Posterior cingulate gyrus (tissue), 11 donors: ENCODE measurements at regions of chr10 and their contacts with region 1.

Region 1: GRCh38 chr10:28676968-28677887 is at the start of gene BAMBI:
- DNase-seq: peak; percentile 85 to 99 (median 90)

Region 2: DNA sequence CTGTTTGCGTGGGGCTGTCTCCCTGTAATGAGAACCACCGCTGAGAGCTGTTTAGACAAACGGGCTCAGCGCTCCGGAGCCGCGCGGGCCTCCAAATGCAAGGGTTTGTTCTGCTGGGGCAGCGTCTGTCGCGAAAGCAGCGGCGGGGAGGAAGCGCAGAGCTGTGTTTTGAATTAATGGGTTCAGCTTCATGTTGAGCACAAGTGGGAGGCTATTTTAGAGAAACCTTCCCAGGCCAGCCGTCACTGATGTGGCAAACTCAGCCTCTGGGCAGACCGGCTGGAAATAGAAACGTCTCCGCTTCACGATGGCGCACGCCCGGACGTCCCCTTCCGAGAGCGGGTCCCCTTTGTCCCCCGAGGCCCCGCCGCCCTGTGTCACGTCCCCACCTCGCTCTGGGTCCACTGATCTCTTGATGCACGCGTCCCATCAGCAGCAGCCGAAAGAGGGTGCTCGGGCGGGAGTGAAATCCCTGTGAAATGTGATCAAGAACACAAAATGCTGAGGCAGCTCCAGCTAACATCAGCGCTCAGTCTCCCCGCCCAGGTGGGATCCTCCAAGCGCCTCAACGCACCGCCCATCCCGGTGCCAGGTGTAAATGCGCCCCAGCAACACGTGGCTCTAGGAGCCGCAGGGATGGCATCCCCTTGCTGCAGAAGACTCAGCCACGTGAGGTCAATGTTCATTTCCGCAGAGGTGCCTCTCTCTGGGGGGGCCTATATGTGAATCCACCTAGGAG is 45.0 kb after region 1 on chr10:
- intact Hi-C with region 1: loop called (anchors 5 kb)
- DNase-seq: peak; percentile 33 to 95 (median 64)

Region 3: DNA sequence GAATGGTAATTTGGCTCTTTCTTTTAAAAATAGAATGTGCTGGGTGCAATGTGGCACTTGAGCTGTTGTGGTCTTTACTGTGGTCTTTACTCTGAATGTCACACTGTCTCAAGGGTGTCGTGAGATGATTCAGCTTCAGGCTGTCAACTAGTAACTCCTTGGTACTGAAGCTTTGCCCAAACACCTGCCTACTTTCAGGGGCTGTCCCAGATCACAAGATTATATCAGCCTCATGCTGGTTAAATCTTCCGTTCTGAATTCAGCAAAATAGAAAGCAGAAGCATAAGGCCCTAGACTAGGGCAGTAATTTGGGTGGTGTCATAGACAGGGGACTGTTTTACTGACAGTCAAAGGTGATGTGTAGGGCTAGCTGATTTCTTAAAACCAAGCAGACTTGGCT is 111.0 kb after region 1 on chr10:
- intact Hi-C with region 1: loop called (anchors 5 kb)
- DNase-seq: no peak

Region 4: DNA sequence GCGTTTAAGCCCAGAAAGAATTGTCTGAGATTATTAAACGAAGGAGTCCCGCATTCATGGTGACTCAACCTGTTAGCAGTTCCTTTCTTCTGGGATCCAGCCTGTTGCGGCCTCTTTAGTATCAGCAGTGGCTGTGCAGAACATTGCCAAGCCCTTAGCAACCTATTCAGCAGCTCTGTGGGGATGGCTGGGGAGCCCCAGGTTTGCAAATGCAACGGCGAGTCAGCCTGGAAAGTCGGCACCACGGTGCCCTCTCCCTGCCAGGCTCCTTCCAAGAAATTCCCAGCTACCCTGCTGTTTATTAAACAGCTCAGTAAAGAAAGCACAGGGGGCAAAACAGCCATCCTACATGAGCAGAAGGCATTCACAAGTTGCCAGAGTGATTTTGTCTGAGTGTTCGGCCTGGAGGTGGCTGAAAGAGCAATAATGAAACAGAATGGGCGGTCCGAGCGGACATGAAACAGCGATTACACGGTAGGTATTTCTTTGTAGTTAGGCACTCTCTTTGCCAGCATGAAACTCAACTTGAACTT is 198.4 kb after region 1 on chr10:
- intact Hi-C with region 1: loop called (anchors 2 kb)
- DNase-seq: peak in 6 of 10 donors; percentile 11 to 86 (median 35)

Region 5: DNA sequence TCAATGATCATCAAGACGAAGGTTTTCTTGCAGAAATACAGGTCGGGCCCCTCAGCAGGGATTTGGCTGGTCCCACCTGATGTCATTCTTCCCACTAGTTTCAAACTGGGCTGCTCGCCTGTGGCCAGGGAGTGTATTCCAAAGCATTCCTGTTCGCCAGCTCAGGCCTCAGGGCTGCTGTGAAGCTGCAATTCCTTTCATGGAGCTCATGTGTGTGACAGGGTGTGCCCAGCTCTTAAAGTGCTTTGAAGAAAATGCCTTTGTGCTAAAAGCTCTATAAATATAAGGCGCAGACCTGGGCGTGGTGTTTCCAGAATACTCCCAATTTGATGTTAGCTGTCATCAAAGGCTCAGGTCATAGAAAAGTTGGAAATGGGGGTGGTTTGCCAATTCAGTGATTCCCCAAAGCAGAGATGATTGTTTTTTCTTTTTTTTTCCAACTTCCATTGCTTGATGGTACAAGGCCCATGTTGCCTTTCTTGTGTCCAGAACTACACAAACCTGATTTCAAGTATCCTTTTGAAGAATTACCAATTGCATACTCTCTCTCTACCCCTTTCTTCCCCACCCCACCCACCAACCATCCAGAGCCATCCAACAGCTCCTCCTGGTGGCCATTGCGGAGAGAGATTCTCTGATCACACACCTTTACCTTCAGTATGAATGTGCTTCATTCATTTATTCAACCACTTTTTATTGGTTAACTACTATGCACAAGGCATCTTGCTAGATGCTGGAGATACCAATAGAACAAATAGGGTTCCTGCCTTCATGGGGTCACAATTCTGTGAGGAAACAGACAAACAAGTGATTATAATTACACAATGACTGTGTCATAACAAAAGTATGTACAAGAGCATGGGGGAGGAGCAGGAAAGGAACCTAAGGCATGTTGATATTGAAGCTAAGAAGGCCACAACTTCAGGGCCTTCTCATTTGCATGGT is 314.4 kb after region 1 on chr10:
- intact Hi-C with region 1: loop called (anchors 5 kb)
- DNase-seq: peak in 1 of 10 donors; percentile 12